ENCODE measurements at regions of chr10 and their contacts with region 1.

Region 1: GRCh38 chr10:101467286-101467770 is 113.4 kb downstream of the BTRC start:
- DNase-seq: peak; percentile 34
- H3K4me3 ChIP-seq: no peak overlapping the region
- H3K27ac ChIP-seq: no peak overlapping the region
- H3K27me3 ChIP-seq: no peaks in the 10 kb centered on the region
- CTCF ChIP-seq: peak; percentile 94

Region 2: DNA sequence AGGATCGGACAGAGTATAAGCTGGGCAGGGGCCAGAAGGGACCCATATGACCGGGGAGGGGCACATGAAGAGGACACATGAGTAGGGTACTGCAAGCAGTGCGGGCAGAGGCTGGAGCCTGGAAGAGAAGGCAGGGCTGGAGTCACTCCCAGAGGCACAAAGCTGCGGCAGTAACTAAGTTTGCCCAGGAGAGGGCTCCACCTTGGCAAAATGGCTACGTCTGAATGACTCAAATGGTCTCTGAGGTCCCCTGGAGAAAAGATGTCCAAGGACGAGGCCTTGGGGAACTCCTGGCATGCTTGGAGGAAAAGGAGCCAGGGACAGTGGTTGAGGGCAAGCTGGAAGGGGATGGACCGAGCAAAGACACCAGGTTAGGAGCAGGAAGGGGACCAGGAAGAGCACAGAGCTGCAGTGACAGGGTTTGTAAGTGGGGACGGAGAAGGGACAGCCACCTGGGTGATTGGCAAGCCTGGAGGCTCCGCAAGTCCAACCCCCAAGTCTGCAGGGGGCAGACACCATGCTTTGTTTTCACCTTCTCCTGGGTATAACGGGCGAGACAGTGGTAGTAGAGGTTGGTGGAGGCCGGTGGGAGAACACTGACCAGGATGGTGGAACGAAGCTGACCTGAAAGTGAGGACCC is 195.0 kb before region 1 on chr10:
- CTCF ChIA-PET with region 1: interaction called, 17 read pairs
- POLR2A ChIA-PET with region 1: no interaction called
- DNase-seq: peak; percentile 21
- H3K4me3 ChIP-seq: no peak overlapping the region
- H3K27ac ChIP-seq: no peak overlapping the region
- H3K27me3 ChIP-seq: peaks cover 17% of the 10 kb centered on the region
- CTCF ChIP-seq: peak; percentile 79

Region 3: DNA sequence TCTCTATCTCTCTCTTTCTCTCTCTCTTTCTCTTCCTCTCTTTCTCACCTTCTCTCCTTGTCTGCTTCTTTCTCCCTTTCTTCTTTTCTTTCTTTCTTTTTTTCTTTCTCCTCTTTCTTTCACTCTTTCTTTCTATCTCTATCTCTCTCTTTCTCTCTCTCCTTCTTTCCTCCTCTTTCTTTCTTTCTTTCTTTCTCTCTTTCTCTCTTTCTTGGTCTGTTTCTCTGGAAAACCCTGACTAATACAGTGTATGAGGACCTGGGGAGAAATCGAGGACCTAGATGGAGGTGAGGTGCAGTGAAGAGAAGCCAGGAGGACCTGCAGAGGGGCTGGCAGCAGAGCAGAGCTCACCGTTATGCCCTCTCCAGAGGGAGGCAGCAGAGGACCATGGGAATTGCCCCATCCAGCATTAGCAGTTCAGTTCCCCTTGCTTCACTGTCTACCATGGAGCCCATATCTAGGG is 166.0 kb before region 1 on chr10:
- CTCF ChIA-PET with region 1: interaction called, 37 read pairs
- POLR2A ChIA-PET with region 1: no interaction called
- DNase-seq: peak; percentile 13
- H3K4me3 ChIP-seq: no peak overlapping the region
- H3K27ac ChIP-seq: no peak overlapping the region
- H3K27me3 ChIP-seq: peaks cover 73% of the 10 kb centered on the region
- CTCF ChIP-seq: peak; percentile 60

Region 4: GRCh38 chr10:101367569-101368453 is 99.5 kb before region 1 on chr10:
- CTCF ChIA-PET with region 1: interaction called, 12 read pairs
- POLR2A ChIA-PET with region 1: no interaction called
- DNase-seq: peak; percentile 15
- H3K4me3 ChIP-seq: no peak overlapping the region
- H3K27ac ChIP-seq: no peak overlapping the region
- H3K27me3 ChIP-seq: no peaks in the 10 kb centered on the region
- CTCF ChIP-seq: no peak

Region 5: DNA sequence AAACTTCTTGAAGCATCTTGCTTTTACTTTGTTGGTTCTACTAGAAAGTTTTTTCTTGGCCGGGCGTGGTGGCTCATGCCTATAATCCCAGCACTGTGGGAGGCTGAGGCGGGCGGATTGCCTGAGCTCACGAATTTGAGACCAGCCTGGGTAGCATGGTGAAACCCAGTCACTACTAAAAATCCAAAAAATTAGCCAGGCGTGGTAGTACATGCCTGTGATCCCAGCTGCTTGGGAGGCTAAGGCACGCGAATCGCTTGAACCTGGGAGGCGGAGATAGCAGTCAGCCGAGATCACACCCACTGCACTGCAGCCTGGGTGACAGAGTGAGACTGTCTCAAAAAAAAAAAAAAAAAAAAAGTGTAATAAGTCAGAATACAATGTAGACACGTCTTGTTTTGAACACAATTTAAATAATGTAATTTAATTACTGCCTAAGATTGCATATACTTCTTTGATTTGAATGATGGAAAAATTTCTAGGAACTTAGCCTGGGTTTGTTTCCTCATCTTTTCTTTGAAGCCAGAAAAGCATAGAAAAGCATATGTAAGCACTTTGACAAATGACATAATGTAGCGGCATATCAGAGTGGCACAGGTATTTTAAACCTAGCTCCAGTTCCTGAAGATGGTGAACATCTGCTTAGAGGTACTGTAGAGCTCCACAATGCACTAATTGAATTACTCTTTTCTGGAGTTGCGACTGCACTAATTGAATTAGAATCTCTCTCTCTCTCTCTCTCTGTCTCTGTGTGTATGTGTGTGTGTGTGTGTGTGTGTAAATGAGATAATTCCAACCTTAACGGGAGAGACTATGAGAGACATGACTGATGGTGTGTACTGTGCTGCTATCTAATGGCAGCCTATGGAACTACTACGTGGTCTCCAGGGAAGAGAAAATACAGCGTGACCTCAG is 25.5 kb before region 1 on chr10:
- CTCF ChIA-PET with region 1: interaction called, 58 read pairs
- POLR2A ChIA-PET with region 1: no interaction called
- DNase-seq: peak; percentile 30
- H3K4me3 ChIP-seq: no peak overlapping the region
- H3K27ac ChIP-seq: no peak overlapping the region
- H3K27me3 ChIP-seq: no peaks in the 10 kb centered on the region
- CTCF ChIP-seq: peak; percentile 74

Region 6: GRCh38 chr10:101485681-101486554 is 18.6 kb after region 1 on chr10:
- CTCF ChIA-PET with region 1: interaction called, 57 read pairs
- POLR2A ChIA-PET with region 1: no interaction called
- DNase-seq: no peak
- H3K4me3 ChIP-seq: no peak overlapping the region
- H3K27ac ChIP-seq: no peak overlapping the region
- H3K27me3 ChIP-seq: no peaks in the 10 kb centered on the region
- CTCF ChIP-seq: no peak

Region 7: GRCh38 chr10:101525848-101526247 is 58.5 kb after region 1 on chr10:
- CTCF ChIA-PET with region 1: interaction called, 11 read pairs
- POLR2A ChIA-PET with region 1: no interaction called
- DNase-seq: no peak
- H3K4me3 ChIP-seq: no peak overlapping the region
- H3K27ac ChIP-seq: no peak overlapping the region
- H3K27me3 ChIP-seq: no peaks in the 10 kb centered on the region
- CTCF ChIP-seq: no peak

Region 8: DNA sequence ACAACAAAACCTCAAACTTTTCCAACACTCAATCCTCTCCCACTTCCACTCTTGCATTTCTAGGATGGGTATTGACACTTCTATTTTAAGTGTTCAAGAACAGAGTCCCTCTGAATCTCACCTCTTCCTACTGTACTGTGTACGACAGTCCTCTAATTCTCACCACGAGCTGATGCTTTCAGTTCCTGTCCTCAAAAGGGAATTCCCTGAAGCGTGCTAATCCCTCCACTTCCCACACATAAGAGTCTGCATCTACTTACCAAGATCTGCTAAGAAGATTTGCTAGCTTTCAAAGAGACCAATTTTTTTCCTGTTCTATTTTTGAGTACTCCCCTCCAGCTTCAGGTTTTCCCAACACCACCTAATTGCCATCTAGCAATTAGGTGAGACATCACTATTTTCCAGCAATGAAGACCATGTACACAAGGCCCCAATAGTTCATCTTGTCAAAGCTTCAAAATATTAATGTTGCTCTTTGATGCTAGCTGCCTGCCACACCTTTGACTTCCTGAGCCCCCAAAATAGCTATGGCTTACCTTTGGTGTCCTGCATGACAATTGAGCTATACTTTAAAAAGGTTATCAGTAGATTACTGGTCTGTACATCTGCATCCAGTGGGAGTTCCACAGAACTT is 534.2 kb after region 1 on chr10:
- CTCF ChIA-PET with region 1: no interaction called
- POLR2A ChIA-PET with region 1: no interaction called
- DNase-seq: no peak
- H3K4me3 ChIP-seq: no peak overlapping the region
- H3K27ac ChIP-seq: no peak overlapping the region
- H3K27me3 ChIP-seq: no peaks in the 10 kb centered on the region
- CTCF ChIP-seq: no peak

Measured in AG04450 (cell line).